Activated CD8-positive, alpha-beta T cell treated with anti-CD3 and anti-CD28 coated beads for 36 hours (primary cell): ENCODE measurements at regions of chr5 and their contacts with region 1.

Region 1: DNA sequence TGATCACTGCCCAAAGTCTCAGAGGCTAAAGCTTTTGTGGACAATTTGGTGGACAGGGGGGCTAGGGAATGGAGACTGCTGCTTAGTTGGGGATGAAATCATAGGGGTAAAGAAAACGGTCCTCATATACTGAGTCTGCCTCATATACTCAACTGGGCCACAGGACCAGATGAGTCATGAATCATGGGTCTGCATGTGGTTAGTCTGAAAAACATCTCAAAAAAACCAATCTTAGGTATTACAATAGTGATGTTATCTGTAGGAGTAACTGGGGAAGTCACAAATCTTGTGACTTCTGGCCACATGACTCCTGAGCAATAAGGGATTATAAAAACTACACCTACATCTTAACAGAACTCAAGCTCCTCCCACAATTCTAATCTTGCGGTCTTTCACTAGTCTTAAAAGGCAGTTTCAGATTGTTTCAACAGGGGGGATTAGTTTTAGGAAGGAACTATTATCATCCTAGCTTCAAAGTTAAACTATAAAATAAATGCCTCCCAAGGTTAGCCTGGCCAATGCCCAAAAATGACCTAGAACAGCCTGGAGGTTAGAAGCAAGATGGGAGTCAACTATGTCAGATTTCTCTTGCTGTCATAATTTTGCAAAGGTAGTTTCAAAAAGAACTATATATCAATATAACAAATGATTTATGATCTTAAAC is 17.5 kb downstream of the TMEM161B start:
- DNase-seq: peak; percentile 58
- ATAC-seq: peak; percentile 95
- H3K4me3 Mint-ChIP-seq: no peak overlapping the region
- H3K27ac Mint-ChIP-seq: peak overlapping the region; percentile 83
- H3K4me1 Mint-ChIP-seq: peaks cover 78% of the 10 kb centered on the region
- H3K27me3 Mint-ChIP-seq: no peaks in the 10 kb centered on the region
- CTCF ChIP-seq: no peak

Region 2: GRCh38 chr5:88140856-88141752 is 110.1 kb before region 1 on chr5:
- CTCF ChIA-PET with region 1: no interaction called
- POLR2A ChIA-PET with region 1: no interaction called
- intact Hi-C with region 1: loop called (anchors 10 kb)
- DNase-seq: peak; percentile 93
- ATAC-seq: peak; percentile 94
- H3K4me3 Mint-ChIP-seq: no peak overlapping the region
- H3K27ac Mint-ChIP-seq: no peak overlapping the region
- H3K4me1 Mint-ChIP-seq: peaks cover 15% of the 10 kb centered on the region
- H3K27me3 Mint-ChIP-seq: peaks cover 38% of the 10 kb centered on the region
- CTCF ChIP-seq: peak; percentile 59

Region 3: GRCh38 chr5:88203981-88204750 is 47.0 kb before region 1 on chr5:
- CTCF ChIA-PET with region 1: no interaction called
- POLR2A ChIA-PET with region 1: no interaction called
- intact Hi-C with region 1: loop called (anchors 10 kb)
- DNase-seq: peak; percentile 68
- ATAC-seq: peak; percentile 96
- H3K4me3 Mint-ChIP-seq: no peak overlapping the region
- H3K27ac Mint-ChIP-seq: peak overlapping the region; percentile 86
- H3K4me1 Mint-ChIP-seq: peaks cover 14% of the 10 kb centered on the region
- H3K27me3 Mint-ChIP-seq: no peaks in the 10 kb centered on the region
- CTCF ChIP-seq: no peak

Region 4: DNA sequence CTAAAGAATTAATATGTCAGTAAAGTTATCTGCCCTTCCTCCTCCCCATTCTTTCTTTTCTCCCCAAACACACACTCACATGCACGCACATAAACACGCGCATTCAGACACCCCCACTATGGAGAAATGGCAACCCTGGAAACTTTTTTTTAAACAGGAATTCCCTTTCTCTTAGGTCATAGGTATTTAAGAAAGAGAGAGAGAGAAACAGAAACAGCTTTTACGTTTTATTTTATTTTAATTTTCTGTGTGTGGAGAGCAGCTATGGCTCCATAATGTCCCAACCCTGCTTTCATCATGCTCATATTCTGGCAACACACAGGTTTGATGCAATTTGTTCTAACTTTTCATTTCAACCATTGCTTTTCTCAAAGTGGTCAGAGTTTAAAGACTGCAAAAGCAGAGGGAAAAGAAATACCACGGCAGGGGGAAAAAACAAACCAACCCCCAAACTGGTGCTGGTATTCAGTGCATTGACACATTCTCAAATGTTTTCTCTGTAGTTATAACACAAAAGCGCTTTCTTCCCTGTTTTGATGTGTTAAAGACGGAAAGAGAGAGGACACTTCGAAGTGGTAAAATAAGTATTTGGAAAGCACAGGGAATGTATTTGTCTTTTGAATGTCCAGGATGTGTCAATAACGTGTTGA is 143.5 kb after region 1 on chr5:
- CTCF ChIA-PET with region 1: no interaction called
- POLR2A ChIA-PET with region 1: no interaction called
- intact Hi-C with region 1: no loop called
- DNase-seq: no peak
- ATAC-seq: no peak
- H3K4me3 Mint-ChIP-seq: no peak overlapping the region
- H3K27ac Mint-ChIP-seq: no peak overlapping the region
- H3K4me1 Mint-ChIP-seq: peaks cover 4% of the 10 kb centered on the region
- H3K27me3 Mint-ChIP-seq: peaks cover 20% of the 10 kb centered on the region
- CTCF ChIP-seq: no peak